Activated CD4-positive, alpha-beta memory T cell treated with anti-CD3 and anti-CD28 coated beads for 36 hours (primary cell): ENCODE measurements at regions of chr16 and their contacts with region 1.

Region 1: DNA sequence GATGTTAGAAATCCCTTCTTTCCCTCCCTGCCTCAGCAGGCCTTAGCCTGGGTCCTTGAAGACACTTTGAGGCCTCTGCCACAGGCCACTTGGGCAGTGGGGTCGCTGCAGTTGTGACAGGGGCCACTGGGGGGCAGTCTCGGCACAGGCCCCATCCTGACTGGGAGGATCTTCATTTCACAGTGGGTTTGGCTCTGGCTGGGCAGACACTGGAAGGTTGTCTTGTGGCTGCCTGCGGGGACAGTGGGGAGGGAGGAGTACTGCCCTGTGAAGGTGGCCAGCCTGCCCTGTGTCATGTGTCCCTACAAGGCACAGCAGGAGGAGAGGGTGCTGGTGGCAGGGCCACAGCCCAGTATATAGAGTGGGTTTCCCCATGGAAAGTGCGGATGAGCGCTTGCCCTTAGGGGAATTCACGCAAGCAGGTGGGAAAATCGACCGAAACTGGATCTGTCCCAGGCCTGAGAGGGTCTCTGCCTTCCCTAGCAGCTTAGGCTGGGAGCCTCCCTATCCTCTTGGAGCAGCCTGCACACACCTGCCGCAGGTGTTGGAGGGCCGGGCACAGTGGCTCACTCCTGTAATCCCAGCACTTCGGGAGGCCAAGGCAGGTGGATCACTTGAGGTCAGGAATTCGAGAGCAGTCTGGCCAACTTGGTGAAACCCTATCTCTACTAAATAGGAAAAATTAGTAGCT is 28.8 kb downstream of the GINS2 start:
- DNase-seq: peak; percentile 80
- H3K4me3 Mint-ChIP-seq: no peak overlapping the region
- H3K27ac Mint-ChIP-seq: peak overlapping the region; percentile 23
- H3K4me1 Mint-ChIP-seq: no peaks in the 10 kb centered on the region
- H3K27me3 Mint-ChIP-seq: no peaks in the 10 kb centered on the region

Region 2: GRCh38 chr16:85673529-85674417 is 13.8 kb after region 1 on chr16:
- CTCF ChIA-PET with region 1: interaction called, 16 read pairs
- POLR2A ChIA-PET with region 1: no interaction called
- intact Hi-C with region 1: no loop called
- DNase-seq: no peak
- H3K4me3 Mint-ChIP-seq: no peak overlapping the region
- H3K27ac Mint-ChIP-seq: no peak overlapping the region
- H3K4me1 Mint-ChIP-seq: peaks cover 12% of the 10 kb centered on the region
- H3K27me3 Mint-ChIP-seq: no peaks in the 10 kb centered on the region

Region 3: GRCh38 chr16:85717393-85718121 is 57.6 kb after region 1 on chr16:
- CTCF ChIA-PET with region 1: interaction called, 74 read pairs
- POLR2A ChIA-PET with region 1: no interaction called
- intact Hi-C with region 1: loop called (anchors 1 kb)
- DNase-seq: peak; percentile 67
- H3K4me3 Mint-ChIP-seq: no peak overlapping the region
- H3K27ac Mint-ChIP-seq: no peak overlapping the region
- H3K4me1 Mint-ChIP-seq: peaks cover 4% of the 10 kb centered on the region
- H3K27me3 Mint-ChIP-seq: peaks cover 7% of the 10 kb centered on the region